Calu3 (cell line): ENCODE measurements at regions of chr9 and their contacts with region 1.

Region 1: DNA sequence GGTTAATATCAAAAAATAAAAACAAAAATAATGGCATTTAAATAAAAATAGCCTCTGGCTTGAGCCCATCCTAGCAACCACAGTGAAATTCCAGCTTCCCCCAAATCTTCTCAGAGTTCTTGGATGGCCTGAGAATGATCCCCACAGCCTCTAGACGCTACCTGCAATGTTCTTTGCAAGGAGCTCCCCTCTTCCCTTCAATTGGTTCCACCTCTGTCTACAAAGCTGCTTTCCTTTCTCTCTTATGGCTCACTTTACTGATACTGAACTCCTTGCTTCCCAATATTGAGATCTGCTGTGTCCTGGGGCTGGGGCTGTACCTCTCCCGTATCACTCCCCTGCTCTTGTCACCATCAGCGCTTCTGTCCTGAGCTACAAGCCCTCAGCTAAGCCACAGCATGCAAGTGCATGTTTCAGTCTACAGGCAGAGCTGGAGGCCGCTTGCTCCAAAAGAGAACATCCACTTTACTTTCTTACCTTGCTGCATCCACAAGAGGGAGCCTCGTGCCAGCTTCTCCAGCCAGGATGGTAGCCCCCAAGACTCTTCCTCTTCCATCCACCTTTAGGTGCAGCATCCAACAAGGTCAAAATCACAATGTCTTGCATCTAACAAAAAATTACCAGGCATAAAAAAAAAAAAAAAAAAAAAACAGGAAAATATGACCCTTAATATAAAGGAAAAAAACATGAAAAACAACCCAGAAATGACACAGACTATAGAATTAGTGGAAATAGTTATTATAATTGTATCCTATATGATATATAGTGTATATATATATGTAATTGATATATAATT is 57.4 kb upstream of the PRSS3 start:
- DNase-seq: peak; percentile 53
- H3K4me3 Mint-ChIP-seq: no peak overlapping the region
- H3K27ac Mint-ChIP-seq: peak overlapping the region; percentile 33
- H3K4me1 Mint-ChIP-seq: peaks cover 40% of the 10 kb centered on the region
- H3K27me3 Mint-ChIP-seq: no peaks in the 10 kb centered on the region
- CTCF ChIP-seq: peak; percentile 57

Region 2: DNA sequence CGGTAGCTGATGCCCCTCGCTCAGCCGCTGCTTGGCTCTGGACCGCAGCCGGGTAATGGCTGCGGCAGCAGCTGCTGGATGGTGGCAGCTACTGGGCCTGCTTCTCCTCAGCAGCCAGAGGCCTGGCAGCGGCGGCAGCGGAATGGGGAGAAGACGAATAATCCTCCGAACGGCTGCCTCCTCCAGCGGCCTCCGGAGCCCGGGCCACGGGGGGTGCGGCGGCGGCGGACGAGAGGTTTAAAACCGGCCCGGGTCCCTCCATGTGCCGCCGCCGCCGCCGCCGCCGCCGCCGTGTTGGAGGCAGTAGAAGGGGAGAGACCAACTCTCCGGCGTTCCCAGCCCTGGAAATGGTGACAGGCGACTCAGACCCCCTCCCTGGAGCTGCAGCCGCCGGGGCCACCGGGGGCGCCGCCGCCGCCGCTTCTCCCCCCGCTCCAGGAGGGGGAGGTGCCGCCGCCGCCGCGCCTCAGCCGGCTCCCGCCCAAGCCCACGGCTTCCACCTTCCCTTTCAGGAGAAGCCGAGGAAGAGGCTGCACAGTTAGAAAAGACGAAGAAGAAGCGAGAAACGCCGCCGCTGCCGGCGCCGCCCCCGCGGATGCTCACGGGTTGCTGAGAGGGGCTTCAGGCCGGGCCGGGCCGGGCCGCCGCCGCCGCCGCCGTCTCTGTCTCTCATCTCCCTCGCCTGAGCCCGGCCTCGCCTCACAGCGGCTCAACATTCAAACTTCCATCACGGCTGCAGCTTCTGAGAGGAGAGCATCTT is 61.1 kb before region 1 on chr9:
- CTCF ChIA-PET with region 1: no interaction called
- intact Hi-C with region 1: no loop called
- DNase-seq: no peak
- H3K4me3 Mint-ChIP-seq: peak overlapping the region; percentile 70
- H3K27ac Mint-ChIP-seq: no peak overlapping the region
- H3K4me1 Mint-ChIP-seq: peaks cover 17% of the 10 kb centered on the region
- H3K27me3 Mint-ChIP-seq: peaks cover 65% of the 10 kb centered on the region
- CTCF ChIP-seq: no peak

Region 3: DNA sequence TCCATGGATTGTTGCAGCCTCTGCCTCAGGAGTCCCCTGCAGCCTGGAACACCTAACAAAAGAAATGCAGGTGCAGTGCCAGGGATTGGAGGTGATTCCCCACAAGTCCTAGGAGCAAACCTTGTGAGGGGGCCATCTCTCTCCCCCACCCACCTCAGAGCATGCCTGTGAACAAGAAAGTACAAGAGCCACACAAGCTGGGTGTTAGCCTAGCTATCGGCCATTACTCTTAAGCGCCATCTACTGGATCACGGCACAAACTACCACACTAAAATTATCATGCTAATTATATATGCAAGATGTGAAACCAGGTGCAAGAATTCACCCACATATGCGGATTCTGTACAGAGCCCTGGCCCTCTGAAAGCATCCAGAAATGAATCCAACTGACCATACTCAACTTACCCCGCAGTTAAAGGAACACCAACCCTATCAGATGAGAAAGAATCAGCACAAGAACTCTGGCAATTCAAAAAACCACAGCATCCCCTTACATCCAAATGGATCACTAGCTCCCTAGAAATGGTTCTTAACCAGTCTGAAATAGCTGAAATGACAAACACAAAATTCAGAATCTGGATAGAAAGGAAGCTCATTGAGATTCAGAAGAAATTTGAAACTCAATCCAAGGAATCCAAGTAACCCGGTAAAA is 40.8 kb after region 1 on chr9:
- CTCF ChIA-PET with region 1: interaction called, 48 read pairs
- intact Hi-C with region 1: loop called (anchors 2 kb)
- DNase-seq: peak; percentile 61
- H3K4me3 Mint-ChIP-seq: peak overlapping the region; percentile 52
- H3K27ac Mint-ChIP-seq: peak overlapping the region; percentile 63
- H3K4me1 Mint-ChIP-seq: peaks cover 52% of the 10 kb centered on the region
- H3K27me3 Mint-ChIP-seq: no peaks in the 10 kb centered on the region
- CTCF ChIP-seq: peak; percentile 55

Region 4: DNA sequence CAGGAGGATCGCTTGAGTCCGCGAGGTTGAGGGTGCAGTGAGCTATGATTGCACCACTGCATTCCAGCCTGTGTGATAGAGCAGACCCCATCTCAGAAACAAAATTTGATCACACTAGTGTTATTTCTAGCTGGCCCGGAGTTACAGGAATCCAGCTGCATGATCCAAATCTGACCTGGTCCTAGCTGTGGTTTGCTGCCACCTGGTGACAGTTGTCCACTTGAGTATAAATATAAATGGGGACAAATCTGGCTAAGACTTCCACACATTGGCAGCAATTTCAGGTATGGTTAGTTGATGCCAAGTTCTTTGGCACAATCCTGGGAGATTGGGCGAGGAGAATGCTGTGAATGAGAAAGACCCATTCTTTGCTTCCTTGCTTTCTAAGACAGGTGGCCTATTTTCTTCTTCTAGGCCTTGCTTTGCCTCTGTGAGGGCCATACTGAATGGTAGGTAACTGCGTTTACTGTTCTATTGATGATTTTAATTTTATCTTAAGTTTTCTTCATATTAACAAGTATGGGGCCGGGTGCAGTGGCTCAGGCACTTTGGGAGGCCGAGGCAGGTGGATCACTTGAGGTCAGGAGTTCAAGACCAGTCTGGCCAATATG is 114.3 kb after region 1 on chr9:
- CTCF ChIA-PET with region 1: interaction called, 12 read pairs
- intact Hi-C with region 1: loop called (anchors 2 kb)
- DNase-seq: peak; percentile 65
- H3K4me3 Mint-ChIP-seq: no peak overlapping the region
- H3K27ac Mint-ChIP-seq: no peak overlapping the region
- H3K4me1 Mint-ChIP-seq: peaks cover 42% of the 10 kb centered on the region
- H3K27me3 Mint-ChIP-seq: no peaks in the 10 kb centered on the region
- CTCF ChIP-seq: no peak